Naive thymus-derived CD4-positive, alpha-beta T cell (primary cell): ENCODE measurements at regions of chr15 and their contacts with region 1.

Region 1: DNA sequence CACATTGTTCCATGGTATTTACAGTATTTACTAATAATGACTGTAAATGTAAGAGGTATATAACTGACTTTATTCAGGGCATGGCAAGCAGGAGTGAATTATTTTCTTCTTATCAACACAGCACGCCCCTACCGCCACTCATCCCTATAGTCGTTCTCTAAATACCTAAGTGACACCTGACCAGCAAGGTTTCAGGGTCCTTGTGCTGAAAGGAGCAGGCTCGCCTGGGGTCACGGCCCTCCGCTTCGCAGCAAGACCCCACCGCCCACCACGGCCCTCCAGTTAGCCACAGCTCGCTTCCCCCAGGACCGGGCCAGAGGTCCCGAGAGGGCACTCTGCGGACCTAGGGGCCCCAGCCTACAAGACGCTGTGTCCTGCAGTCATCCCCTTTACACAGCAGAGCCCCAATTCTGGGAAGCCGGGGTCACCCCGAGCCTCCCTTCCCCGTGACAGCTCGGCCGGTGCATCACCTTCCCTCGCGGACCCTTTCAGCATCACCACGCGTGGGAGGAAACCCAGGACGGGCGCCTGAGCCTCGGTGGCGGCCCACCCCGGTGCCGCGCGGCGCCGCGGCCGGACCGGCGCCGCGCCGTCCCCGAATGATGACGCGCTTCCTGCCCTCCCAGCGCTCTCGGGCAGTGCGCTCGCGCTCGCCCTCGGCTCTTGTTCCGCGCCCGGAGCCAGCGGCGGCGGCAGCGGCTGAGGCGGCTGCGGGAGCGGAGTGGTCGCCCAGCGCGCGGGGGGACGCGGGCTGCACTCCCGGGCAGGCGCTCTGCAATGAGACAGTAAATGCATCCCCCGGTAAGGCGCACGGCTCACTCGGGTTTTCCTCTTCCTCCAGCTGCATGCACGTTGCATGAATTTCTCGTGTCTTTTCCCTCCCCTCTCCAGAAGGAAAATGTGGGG is 225.1 kb upstream of the C2CD4B start:
- DNase-seq: peak in 8 of 9 donors; percentile 9 to 78 (median 38)
- ATAC-seq: peak; percentile 88
- H3K4me3 ChIP-seq: peak within 1 kb of the TSS; percentile 70
- H3K4me3 Mint-ChIP-seq: peak within 1 kb of the TSS; percentile 92 to 97 (median 95)
- H3K27ac ChIP-seq: no peak within 1 kb of the TSS
- H3K27ac Mint-ChIP-seq: peak within 1 kb of the TSS; percentile 19 to 92 (median 66)
- H3K4me1 ChIP-seq: peaks cover 8% of the 10 kb centered on the region in 2 donors
- H3K4me1 Mint-ChIP-seq: peaks cover 10 to 20% (median 17%) of the 10 kb centered on the region in 7 donors
- H3K27me3 ChIP-seq: peaks cover 0 to 8% of the 10 kb centered on the region in 2 donors
- H3K27me3 Mint-ChIP-seq: peaks cover 14 to 47% (median 27%) of the 10 kb centered on the region in 5 donors

Region 2: GRCh38 chr15:62209821-62210220 is 180.3 kb before region 1 on chr15:
- CTCF ChIA-PET with region 1: no interaction called
- POLR2A ChIA-PET with region 1: no interaction called
- intact Hi-C with region 1: loop called in 1 of 2 experiments (anchors 2 kb)
- DNase-seq: no peak
- ATAC-seq: no peak
- H3K4me3 ChIP-seq: no peak overlapping the region
- H3K4me3 Mint-ChIP-seq: no peak overlapping the region
- H3K27ac ChIP-seq: no peak overlapping the region
- H3K27ac Mint-ChIP-seq: no peak overlapping the region
- H3K4me1 ChIP-seq: no peaks in the 10 kb centered on the region
- H3K4me1 Mint-ChIP-seq: peaks cover 0 to 10% (median 6%) of the 10 kb centered on the region in 7 donors
- H3K27me3 ChIP-seq: no peaks in the 10 kb centered on the region
- H3K27me3 Mint-ChIP-seq: peaks cover 7 to 32% (median 11%) of the 10 kb centered on the region in 5 donors

Region 3: GRCh38 chr15:62346168-62346567 is 44.0 kb before region 1 on chr15:
- CTCF ChIA-PET with region 1: no interaction called
- POLR2A ChIA-PET with region 1: no interaction called
- intact Hi-C with region 1: loop called in 1 of 2 experiments (anchors 2 kb)
- DNase-seq: no peak
- ATAC-seq: no peak
- H3K4me3 ChIP-seq: no peak overlapping the region
- H3K4me3 Mint-ChIP-seq: no peak overlapping the region
- H3K27ac ChIP-seq: no peak overlapping the region
- H3K27ac Mint-ChIP-seq: no peak overlapping the region
- H3K4me1 ChIP-seq: no peaks in the 10 kb centered on the region
- H3K4me1 Mint-ChIP-seq: peaks cover 5 to 13% (median 11%) of the 10 kb centered on the region in 7 donors
- H3K27me3 ChIP-seq: no peaks in the 10 kb centered on the region
- H3K27me3 Mint-ChIP-seq: peaks cover 0 to 12% (median 5%) of the 10 kb centered on the region in 5 donors